Testis (tissue), 5 donors: ENCODE measurements at regions of chr13 and their contacts with region 1.

Region 1: DNA sequence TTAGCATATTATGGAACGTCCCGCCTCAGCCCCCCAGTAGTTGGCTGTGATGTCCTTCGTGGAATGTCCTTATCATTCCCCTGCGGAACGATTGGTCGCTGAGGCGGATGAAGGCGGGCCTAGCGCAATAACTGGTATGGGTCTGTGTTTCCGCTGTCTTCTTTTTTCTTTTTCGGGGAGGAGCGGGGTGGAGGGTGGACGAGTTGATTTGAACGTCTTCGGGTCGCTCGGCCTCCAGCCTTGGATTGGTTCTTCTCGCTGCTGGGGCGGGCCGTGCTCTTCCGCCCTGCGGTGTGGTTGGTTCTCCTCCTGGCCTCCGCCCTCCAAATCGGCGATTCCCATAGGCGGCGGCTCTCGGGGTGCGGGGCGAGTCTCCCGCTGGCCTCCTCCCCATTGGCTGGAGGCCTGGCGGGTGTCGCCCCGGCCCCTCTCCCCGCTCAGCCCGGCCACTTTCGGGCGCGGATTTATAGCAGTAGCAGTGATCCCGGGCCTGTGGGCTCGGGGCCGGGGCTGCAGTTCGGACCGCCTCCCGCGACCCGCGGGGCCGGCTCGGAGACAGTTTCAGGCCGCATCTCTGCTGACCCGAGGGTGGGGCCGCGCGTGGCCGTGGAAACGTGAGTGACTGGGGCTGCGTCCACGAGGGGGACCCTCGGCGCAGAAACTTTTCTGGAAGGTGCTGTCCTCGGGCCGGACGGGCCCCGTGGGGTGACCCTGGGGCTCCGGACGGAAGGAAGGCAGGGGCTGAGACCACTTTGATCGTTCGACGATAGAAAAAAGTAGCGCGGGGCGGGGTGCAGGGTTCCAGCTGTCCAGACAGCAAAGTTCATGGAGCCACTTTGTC is 2.1 kb downstream of the ING1 start:
- DNase-seq: peak; percentile 99
- H3K4me3 ChIP-seq: peak overlapping the region; percentile 78 to 99
- H3K27ac ChIP-seq: peak overlapping the region; percentile 92 to 100
- H3K4me1 ChIP-seq: peaks cover 21% of the 10 kb centered on the region
- H3K27me3 ChIP-seq: no peaks in the 10 kb centered on the region
- CTCF ChIP-seq: peak in 2 of 3 experiments; percentile 7 to 10
- POLR2A ChIP-seq: peak; percentile 35

Region 2: DNA sequence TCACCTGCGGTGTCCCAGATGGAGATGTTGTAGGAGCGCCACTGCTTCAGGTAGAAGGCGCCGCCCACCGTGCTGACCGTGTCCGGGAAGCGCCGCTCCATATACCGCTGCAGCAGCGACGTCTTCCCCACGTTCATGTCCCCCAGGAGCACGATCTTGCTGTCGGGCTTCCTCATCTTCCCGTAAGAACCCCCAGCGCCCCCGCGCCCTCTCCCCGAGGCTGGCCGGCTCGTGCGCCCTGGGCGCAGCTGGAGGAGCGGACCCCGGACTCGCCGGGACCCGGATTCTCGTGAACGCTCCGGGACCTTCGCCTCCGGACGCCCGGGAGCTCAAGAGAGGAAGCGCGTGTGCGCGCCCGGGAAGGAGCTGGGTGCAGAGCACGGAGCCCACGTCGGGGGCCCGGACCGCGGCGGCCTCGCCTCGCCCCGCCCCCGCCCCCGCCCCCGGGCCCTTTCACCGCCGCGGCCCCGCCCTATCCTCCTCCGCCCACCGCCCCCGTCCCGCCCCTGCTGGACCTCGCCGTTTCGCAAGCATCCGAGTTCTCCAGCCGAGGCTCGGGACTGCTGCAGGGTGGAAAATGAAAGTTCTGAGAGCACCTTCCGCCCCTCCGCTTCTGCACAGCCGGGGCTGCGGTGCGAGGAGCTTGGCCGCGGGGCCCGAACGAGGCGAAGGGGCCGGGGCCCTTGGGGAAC is 154.1 kb before region 1 on chr13 and contains the start of gene RAB20:
- intact Hi-C with region 1: no loop called
- DNase-seq: peak; percentile 93
- H3K4me3 ChIP-seq: peak within 1 kb of the TSS; percentile 84
- H3K27ac ChIP-seq: peak within 1 kb of the TSS; percentile 93
- H3K4me1 ChIP-seq: peaks cover 28% of the 10 kb centered on the region
- H3K27me3 ChIP-seq: no peaks in the 10 kb centered on the region
- CTCF ChIP-seq: no peak
- POLR2A ChIP-seq: no peak
- total RNA-seq, gene RAB20: 27.2 to 41.1 TPM

Region 3: DNA sequence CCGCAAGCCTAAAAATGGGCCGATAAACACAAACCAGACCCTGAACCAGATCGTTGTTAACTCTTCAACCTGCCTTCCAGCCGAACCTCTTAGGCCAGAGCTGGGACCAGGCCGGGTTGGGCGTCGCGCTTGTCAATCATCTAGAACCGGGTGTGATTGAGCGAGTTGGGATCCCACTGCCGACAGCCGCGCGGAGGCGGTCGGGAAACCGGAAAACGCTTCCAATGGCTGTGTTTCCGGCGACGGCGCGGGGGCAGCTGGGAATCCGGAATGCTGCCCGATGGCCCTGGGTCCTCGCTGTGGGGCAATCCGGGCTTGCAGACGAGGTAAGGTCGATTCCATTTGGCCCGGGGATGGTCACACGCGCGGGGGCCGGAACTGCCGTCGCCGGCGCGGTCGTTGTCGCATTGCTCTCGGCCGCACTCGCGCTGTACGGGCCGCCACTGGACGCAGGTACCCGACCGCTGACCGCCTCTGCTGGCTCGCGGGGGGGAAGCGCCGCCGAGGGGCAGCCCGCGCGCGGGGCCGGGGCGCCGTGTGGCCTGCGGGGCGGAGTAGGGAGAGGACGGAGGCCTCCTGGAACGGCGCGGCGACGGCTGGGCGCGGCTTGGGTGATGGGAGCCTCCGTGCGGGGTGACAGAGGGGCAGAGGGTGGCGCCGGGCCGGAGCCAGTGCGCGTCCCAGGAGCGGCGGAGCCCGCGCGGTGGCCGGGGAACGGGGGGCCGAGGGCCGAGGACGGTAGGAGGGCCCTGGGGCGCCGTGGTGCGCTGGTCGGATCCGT is 100.1 kb before region 1 on chr13 and contains the start of gene NAXD:
- intact Hi-C with region 1: loop called (anchors 10 kb)
- DNase-seq: peak; percentile 97
- H3K4me3 ChIP-seq: peak within 1 kb of the TSS; percentile 70 to 98
- H3K27ac ChIP-seq: peak within 1 kb of the TSS; percentile 91 to 95
- H3K4me1 ChIP-seq: peaks cover 25% of the 10 kb centered on the region
- H3K27me3 ChIP-seq: no peaks in the 10 kb centered on the region
- CTCF ChIP-seq: no peak
- POLR2A ChIP-seq: no peak
- total RNA-seq, gene NAXD: 66.4 to 75.3 TPM

Region 4: GRCh38 chr13:110819203-110820014 is 103.8 kb after region 1 on chr13:
- intact Hi-C with region 1: loop called (anchors 10 kb)
- DNase-seq: peak; percentile 88
- H3K4me3 ChIP-seq: no peak overlapping the region
- H3K27ac ChIP-seq: no peak overlapping the region
- H3K4me1 ChIP-seq: no peaks in the 10 kb centered on the region
- H3K27me3 ChIP-seq: no peaks in the 10 kb centered on the region
- CTCF ChIP-seq: peak; percentile 89 to 97 (median 96)
- POLR2A ChIP-seq: no peak

Region 5: DNA sequence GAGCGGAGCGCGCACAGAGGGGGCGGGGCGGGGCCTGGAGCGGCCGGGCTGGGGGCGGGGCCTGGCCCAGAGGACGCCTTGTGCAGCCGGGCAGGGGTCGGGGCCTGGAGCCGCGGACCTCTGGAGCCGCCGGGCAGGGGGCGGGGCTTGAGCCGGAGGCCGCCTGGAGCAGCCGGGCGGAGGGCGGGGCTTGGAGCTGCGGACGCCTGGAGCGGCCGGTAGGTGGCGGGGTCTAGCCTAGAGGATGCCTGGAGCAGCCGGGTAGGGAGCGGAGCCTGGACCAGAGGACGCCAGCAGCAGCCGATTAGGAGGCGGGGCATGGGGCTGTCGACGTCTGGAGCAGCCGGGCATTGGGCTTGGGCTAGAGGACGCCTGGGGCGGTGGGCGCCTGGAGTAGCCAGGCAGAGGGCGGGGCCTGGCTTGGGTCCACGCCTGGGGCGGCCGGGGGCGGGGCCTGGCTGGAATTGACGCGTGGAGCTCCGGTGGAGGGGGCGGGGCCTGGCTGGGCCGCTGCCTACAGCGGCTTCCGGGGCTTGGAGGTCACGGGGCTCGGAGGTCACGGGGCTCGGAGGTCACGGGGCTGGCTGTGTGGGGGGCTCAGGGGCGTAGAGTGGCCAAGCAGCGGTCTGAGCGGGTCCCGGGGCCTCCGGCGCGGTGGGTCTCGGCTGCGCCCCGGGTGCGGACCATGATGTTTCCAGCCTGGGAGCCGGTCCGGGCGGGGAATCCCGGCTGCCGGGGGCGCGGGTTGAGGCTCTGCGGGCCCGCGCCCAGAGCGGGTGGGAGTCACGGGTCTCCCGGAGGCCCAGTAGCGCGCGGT is 199.7 kb after region 1 on chr13 and contains the start of gene ANKRD10:
- intact Hi-C with region 1: loop called (anchors 10 kb)
- DNase-seq: peak; percentile 99
- H3K4me3 ChIP-seq: peak within 1 kb of the TSS; percentile 86 to 100
- H3K27ac ChIP-seq: peak within 1 kb of the TSS; percentile 96 to 99
- H3K4me1 ChIP-seq: peaks cover 8% of the 10 kb centered on the region
- H3K27me3 ChIP-seq: no peaks in the 10 kb centered on the region
- CTCF ChIP-seq: peak; percentile 86 to 95 (median 88)
- POLR2A ChIP-seq: no peak
- total RNA-seq, gene ANKRD10: 132 to 180 TPM

Region 6: DNA sequence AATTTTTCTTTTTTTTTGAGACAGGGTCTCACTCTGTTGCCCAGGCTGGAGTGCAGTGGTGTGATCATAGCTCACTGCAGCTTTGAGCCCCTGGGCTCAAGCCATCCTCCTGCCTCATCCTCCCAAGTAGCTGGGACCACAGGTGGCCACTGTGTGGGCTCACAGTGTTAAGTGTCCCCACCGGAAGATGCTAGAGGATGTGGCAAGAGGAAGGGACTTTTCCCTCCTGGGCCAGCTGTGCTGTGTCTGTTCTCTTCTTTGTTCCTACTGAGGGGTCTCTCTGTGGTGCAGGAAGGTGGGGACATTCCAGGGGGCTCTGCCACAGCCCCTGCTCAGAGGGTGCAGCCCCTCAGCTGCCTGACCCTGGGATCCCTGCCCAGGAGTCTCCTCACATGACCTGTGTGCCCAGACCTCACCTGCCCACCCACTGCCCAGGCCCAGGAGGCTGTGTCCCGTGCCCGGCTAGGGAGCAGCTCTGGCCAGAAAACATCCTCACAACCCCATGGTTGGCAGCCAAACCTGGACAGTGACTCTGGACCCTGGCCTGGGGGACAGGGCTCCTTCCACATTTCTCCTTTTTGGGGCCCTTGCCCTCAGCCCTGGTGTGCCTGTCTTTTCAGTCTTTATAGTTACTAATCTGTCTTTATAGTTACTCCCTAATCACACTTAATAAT is 213.6 kb after region 1 on chr13:
- intact Hi-C with region 1: no loop called
- DNase-seq: no peak
- H3K4me3 ChIP-seq: no peak overlapping the region
- H3K27ac ChIP-seq: no peak overlapping the region
- H3K4me1 ChIP-seq: no peaks in the 10 kb centered on the region
- H3K27me3 ChIP-seq: no peaks in the 10 kb centered on the region
- CTCF ChIP-seq: no peak
- POLR2A ChIP-seq: no peak